BJ (cell line): ENCODE measurements at regions of chr3 and their contacts with region 1.

Region 1: GRCh38 chr3:79032686-79033318 is 735.0 kb downstream of the ROBO1 start:
- DNase-seq: no peak
- H3K4me3 ChIP-seq: no peak overlapping the region
- H3K27me3 ChIP-seq: no peaks in the 10 kb centered on the region
- CTCF ChIP-seq: peak; percentile 63

Region 2: DNA sequence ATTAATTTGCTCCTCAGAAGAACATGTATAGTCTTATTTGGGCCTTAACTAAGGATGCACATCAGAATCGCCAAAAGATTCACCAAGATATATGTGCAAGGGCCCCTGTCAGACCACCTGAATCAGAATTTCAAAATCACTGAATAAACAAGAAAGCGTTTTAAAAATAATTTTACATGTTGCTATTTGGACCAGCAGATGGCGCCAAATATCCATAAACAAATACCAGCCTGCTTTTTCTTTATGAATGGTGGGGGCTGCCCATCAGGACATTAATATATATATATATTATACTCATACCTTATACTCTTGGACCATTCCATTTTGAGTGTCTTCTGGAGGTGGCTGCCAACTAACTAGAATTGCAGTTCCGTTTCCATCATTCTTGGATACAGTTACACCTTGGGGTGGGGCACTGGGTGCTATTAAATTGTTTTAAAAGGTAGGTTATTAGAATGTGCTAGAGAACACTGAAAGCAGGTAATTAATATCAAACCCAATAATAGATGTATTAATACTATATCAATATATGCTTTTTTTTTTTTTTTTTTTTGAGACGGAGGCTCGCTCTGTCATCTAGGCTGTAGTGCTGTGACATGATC is 373.3 kb before region 1 on chr3:
- CTCF ChIA-PET with region 1: interaction called, 29 read pairs
- POLR2A ChIA-PET with region 1: interaction called, 3 read pairs
- DNase-seq: no peak
- H3K4me3 ChIP-seq: no peak overlapping the region
- H3K27me3 ChIP-seq: no peaks in the 10 kb centered on the region
- CTCF ChIP-seq: peak; percentile 59

Region 3: GRCh38 chr3:78666470-78666800 is 366.4 kb before region 1 on chr3:
- CTCF ChIA-PET with region 1: interaction called, 13 read pairs
- POLR2A ChIA-PET with region 1: no interaction called
- DNase-seq: peak; percentile 46
- H3K4me3 ChIP-seq: no peak overlapping the region
- H3K27me3 ChIP-seq: no peaks in the 10 kb centered on the region
- CTCF ChIP-seq: no peak

Region 4: GRCh38 chr3:78785004-78785403 is 247.8 kb before region 1 on chr3:
- CTCF ChIA-PET with region 1: no interaction called
- POLR2A ChIA-PET with region 1: no interaction called
- DNase-seq: no peak
- H3K4me3 ChIP-seq: no peak overlapping the region
- H3K27me3 ChIP-seq: no peaks in the 10 kb centered on the region
- CTCF ChIP-seq: no peak

Region 5: DNA sequence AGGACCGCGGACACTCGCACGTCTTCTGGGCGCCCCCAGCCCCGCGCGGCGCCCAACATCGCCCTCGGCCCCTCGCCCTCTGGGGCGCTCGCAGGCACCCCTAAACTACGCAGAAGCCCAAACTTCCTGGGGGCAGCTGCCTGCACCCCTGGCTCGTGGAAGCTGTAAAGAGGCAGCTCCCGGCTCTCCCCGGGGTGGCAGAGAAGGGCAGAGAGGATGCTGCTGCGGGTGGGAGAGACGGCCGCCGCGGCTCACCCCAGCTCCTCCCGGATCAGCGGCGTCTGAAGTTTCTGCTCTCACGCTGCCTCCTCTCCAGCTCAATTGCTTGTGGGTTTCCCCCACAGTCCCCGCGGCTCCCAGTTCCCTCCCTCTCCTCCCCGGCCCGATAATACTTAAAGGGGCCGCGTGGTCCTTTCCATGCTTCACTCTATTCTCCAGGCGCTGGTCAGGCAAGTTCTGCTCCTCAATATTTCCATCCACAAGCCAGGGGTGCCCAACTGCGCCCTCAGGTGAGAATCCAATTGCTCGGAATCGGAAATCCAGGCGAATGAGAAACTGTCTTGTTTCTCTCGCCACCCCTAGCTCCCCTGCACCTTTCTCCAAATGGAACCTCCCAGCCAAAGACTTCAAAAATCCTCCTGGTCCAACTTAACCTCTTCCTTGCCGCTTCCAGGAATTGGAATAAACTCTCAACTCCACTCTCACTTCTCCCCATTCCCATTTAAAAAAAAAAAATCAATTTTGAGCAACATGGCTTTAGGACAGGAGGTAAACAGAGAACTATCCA is 13.5 kb before region 1 on chr3:
- CTCF ChIA-PET with region 1: interaction called, 14 read pairs
- POLR2A ChIA-PET with region 1: no interaction called
- DNase-seq: peak; percentile 49
- H3K4me3 ChIP-seq: peak overlapping the region; percentile 88
- H3K27me3 ChIP-seq: no peaks in the 10 kb centered on the region
- CTCF ChIP-seq: no peak